Natural killer cell (primary cell): ENCODE measurements at regions of chr19 and their contacts with region 1.

Region 1: DNA sequence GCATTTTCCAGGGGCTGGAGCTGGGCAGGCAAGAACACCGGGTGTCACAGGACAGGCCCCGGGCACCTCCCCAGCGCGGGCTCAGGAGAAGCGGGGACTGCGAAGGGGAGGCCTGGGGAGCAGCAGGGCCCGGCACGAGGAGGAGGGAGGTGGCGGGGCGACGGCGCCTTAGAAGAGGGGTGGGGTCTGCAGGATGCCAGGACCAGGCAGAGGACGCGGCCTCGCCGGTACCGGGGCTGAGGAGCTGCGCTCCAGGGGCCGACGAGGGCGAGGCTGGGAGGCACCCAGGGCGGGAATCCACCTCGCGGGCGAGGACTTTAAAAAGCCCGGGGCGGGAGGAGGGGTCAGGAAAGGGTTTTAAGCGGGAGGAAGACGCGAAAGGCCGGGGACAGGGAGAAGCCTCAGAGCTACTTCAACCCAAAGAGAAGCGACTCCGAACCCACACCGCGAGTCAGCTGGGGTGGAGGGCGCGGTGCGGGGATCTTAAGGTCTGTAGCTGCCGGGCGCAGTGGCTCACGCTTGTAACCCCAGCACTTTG is 665 bp downstream of the ZNF347 start:
- DNase-seq: peak; percentile 25 to 55
- ATAC-seq: peak; percentile 36 to 38 (median 38)
- H3K4me3 ChIP-seq: peak overlapping the region; percentile 75
- H3K4me3 Mint-ChIP-seq: peak overlapping the region; percentile 66
- H3K27ac ChIP-seq: peak overlapping the region; percentile 62
- H3K27ac Mint-ChIP-seq: peak overlapping the region; percentile 53 to 84
- H3K4me1 ChIP-seq: peaks cover 14% of the 10 kb centered on the region
- H3K4me1 Mint-ChIP-seq: peaks cover 23 to 26% of the 10 kb centered on the region in 2 donors
- H3K27me3 ChIP-seq: no peaks in the 10 kb centered on the region
- H3K27me3 Mint-ChIP-seq: peaks cover 0 to 2% of the 10 kb centered on the region in 2 donors
- CTCF ChIP-seq: no peak

Region 2: DNA sequence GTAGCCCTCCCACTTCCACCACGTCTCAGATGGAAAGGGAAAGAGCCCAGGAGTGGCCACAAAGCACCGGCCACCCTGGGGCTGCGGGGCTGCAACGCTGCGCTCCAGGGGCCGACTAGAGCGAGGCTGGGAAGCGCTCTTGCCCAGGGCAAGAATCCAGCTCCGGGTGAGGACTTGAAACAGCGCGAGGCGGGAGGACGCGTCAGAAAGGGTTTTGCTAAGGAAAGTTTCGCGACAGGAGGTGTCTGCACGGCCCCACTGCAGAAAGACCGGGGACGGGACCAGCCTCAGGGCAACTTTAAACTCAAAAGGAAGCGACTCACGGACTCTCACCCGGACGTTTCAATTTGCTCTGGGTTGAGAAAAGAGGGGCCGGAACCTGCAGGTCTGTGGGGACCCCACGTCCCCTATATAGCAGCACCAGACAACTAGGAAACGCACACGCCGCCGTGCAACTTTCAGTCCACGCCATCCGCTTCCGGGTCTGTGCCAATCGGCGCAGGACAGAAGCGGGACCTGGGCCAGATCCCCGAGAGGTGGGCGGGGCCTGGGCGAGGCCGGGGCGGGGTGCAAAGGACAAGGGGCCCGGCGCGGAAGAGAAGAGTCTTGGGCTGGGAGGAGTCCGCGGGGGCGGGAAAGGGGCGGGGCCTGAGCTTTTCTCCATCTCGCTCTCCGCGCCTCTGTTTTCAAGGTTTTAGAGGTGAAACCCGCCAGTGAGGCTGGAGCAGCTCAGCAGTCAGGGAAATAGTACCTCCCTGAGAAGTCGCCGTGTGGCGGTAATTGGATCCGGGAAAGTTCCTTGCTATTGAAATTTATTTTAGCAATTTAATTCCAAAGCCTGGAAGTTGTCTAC is 195.6 kb before region 1 on chr19 and contains the start of gene ZNF816:
- intact Hi-C with region 1: no loop called
- DNase-seq: peak; percentile 97 to 99
- ATAC-seq: peak; percentile 99 to 100 (median 99)
- H3K4me3 ChIP-seq: peak within 1 kb of the TSS; percentile 68
- H3K4me3 Mint-ChIP-seq: peak within 1 kb of the TSS; percentile 93
- H3K27ac ChIP-seq: peak within 1 kb of the TSS; percentile 66
- H3K27ac Mint-ChIP-seq: peak within 1 kb of the TSS; percentile 89 to 93
- H3K4me1 ChIP-seq: peaks cover 14% of the 10 kb centered on the region
- H3K4me1 Mint-ChIP-seq: peaks cover 34% of the 10 kb centered on the region in 2 donors
- H3K27me3 ChIP-seq: no peaks in the 10 kb centered on the region
- H3K27me3 Mint-ChIP-seq: no peaks in the 10 kb centered on the region
- CTCF ChIP-seq: no peak
- total RNA-seq, gene ZNF816: 4.1 to 11.3 (median 7.7) TPM

Region 3: GRCh38 chr19:53103198-53103944 is 54.8 kb before region 1 on chr19 and contains the start of gene ZNF160:
- intact Hi-C with region 1: loop called (anchors 2 kb)
- DNase-seq: peak; percentile 96 to 98
- ATAC-seq: peak; percentile 93 to 98 (median 93)
- H3K4me3 ChIP-seq: peak within 1 kb of the TSS; percentile 81
- H3K4me3 Mint-ChIP-seq: peak within 1 kb of the TSS; percentile 87
- H3K27ac ChIP-seq: peak within 1 kb of the TSS; percentile 94
- H3K27ac Mint-ChIP-seq: peak within 1 kb of the TSS; percentile 86 to 90
- H3K4me1 ChIP-seq: peaks cover 20% of the 10 kb centered on the region
- H3K4me1 Mint-ChIP-seq: peaks cover 28 to 35% of the 10 kb centered on the region in 2 donors
- H3K27me3 ChIP-seq: no peaks in the 10 kb centered on the region
- H3K27me3 Mint-ChIP-seq: no peaks in the 10 kb centered on the region
- CTCF ChIP-seq: no peak
- total RNA-seq, gene ZNF160: 43.9 to 54.9 (median 54.7) TPM